ENCODE measurements at regions of chr1 and their contacts with region 1.

Region 1: GRCh38 chr1:15218287-15219279 is 28.4 kb upstream of the FHAD1 start:
- DNase-seq: peak; percentile 68 to 86
- H3K4me3 ChIP-seq: no peak overlapping the region
- H3K27ac ChIP-seq: peak overlapping the region; percentile 63
- H3K4me1 ChIP-seq: peaks cover 30% of the 10 kb centered on the region
- H3K27me3 ChIP-seq: no peaks in the 10 kb centered on the region
- CTCF ChIP-seq: no peak

Region 2: DNA sequence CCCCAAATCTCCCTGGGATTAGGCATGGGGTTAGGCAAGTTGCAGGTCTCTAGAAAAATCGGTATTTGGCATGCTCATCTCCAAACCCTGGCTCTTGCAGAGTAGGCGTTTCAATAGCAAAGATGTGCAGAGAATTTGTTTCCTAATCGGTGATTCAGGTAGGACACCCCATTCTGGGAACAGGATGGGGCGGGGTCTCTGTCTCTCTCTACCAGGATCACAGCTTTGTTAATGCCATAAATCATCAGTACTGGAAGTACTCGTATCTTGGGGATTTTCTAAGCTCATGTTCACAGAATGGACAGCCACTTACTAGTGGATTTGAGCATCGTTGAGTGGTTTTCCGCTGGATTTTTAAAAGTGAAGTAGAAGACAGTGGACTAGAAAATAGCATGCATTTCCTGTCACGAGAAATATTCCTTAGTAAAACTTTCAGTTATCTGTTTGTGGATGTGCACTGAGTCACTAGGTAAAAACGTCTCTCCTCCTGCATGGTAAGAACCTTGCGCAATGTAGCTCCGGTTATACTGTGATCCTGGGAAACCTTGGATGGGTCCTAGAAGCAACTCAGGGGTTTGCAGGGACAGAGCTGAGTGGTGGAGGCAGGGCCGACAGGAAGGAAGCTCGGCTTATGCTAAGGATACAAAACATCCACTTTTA is 59.9 kb before region 1 on chr1:
- CTCF ChIA-PET with region 1: interaction called, 11 read pairs
- POLR2A ChIA-PET with region 1: no interaction called
- intact Hi-C with region 1: no loop called
- DNase-seq: peak in 1 of 2 experiments; percentile 37
- H3K4me3 ChIP-seq: no peak overlapping the region; the same call in 1 of the 2 replicates
- H3K27ac ChIP-seq: peak overlapping the region; percentile 48
- H3K4me1 ChIP-seq: peaks cover 17% of the 10 kb centered on the region
- H3K27me3 ChIP-seq: no peaks in the 10 kb centered on the region
- CTCF ChIP-seq: no peak

Region 3: DNA sequence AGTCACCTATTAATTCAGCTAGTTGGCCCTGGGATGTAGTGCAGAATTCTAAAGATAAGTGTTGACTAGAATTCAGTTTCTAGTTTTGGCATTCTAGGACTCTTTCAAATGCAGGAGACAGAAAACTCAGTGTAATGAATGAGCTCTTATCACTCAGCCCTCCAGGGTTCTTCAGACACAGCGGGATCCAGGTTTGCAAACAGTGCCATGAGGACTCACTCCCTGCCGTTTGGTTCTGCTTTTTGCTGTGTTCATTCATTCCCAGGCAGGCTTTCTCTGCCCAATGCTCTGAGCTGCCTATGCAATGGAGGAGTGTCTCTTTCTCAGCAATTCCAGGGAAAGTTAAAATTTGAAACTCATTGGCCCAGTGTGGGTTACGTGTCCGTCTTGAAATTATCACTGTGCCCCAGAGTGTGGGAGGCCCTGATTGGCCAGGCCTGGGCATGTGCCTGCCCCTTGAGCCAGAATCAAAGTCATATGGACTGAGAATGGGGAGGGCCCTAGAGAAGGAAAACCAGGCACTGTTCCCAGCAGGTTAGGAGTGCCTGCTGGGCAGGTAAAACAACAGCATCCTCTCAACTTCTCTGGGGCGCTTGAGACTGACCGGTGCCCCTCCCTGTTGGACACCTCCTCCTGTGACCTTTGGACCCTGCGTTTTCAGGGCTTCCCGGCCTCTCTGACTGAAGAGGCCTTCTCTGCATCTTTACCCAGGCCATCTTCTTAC is 21.6 kb before region 1 on chr1:
- CTCF ChIA-PET with region 1: no interaction called
- POLR2A ChIA-PET with region 1: no interaction called
- intact Hi-C with region 1: loop called (anchors 1 kb)
- DNase-seq: peak in 1 of 2 experiments; percentile 26
- H3K4me3 ChIP-seq: no peak overlapping the region
- H3K27ac ChIP-seq: no peak overlapping the region
- H3K4me1 ChIP-seq: peaks cover 21% of the 10 kb centered on the region
- H3K27me3 ChIP-seq: no peaks in the 10 kb centered on the region
- CTCF ChIP-seq: no peak

Region 4: DNA sequence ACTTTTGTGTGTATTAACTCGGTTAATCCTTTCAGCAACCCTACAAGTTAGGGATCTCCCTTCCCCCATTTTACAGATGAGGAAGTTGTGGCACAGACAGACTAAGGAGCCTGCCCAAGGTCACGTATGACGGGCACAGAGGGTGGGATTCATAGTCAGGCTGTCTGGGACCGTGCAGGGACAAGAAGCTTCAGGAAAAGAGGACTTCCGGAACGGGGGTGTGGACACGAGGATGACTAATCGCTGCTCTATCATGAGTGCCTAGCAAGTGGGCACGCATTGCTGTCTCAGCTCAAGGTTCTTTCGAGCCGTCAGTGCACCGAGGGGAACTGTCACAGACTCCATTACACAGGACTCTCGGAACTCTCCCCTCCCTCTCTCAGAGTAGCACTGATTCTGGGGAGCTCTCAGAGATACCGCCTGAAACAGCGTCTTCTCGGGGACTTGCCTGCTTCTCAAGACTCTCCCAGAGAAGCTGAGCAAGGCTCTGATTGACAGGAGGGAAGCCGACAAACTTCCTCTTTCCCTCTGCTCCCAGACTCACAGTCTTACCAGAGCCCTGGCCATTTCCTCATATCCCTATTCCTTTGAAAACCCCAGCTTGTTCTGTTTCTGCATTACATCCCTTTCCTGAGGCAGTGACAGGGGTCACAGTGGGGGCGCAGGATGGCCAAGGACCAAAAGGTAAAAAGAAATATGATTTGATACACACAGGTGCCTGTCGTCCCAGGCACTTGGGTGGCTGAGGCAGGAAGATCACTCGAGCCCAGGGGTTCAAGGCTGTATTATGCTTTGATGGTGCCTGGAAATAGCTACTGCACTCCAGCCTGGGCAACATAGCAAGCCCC is 42.8 kb after region 1 on chr1:
- CTCF ChIA-PET with region 1: no interaction called
- POLR2A ChIA-PET with region 1: no interaction called
- intact Hi-C with region 1: no loop called
- DNase-seq: no peak
- H3K4me3 ChIP-seq: no peak overlapping the region
- H3K27ac ChIP-seq: no peak overlapping the region
- H3K4me1 ChIP-seq: no peaks in the 10 kb centered on the region
- H3K27me3 ChIP-seq: no peaks in the 10 kb centered on the region
- CTCF ChIP-seq: no peak

Region 5: GRCh38 chr1:15409388-15410222 is 191.0 kb after region 1 on chr1 and contains the start of gene EFHD2:
- CTCF ChIA-PET with region 1: no interaction called
- POLR2A ChIA-PET with region 1: no interaction called
- intact Hi-C with region 1: no loop called
- DNase-seq: peak; percentile 42 to 80
- H3K4me3 ChIP-seq: peak within 1 kb of the TSS; percentile 75
- H3K27ac ChIP-seq: peak within 1 kb of the TSS; percentile 34; the same call in 1 of the 2 replicates
- H3K4me1 ChIP-seq: peaks cover 16% of the 10 kb centered on the region
- H3K27me3 ChIP-seq: no peaks in the 10 kb centered on the region
- CTCF ChIP-seq: no peak
- total RNA-seq, gene EFHD2: 129 and 160 TPM in 2 replicates

Region 6: GRCh38 chr1:15424146-15424667 is 205.6 kb after region 1 on chr1:
- CTCF ChIA-PET with region 1: no interaction called
- POLR2A ChIA-PET with region 1: no interaction called
- intact Hi-C with region 1: loop called (anchors 5 kb)
- DNase-seq: peak; percentile 77 to 79
- H3K4me3 ChIP-seq: no peak overlapping the region
- H3K27ac ChIP-seq: peak overlapping the region; percentile 44; the same call in 1 of the 2 replicates
- H3K4me1 ChIP-seq: peaks cover 27% of the 10 kb centered on the region
- H3K27me3 ChIP-seq: no peaks in the 10 kb centered on the region
- CTCF ChIP-seq: no peak

Measured in PC-9 (cell line).